Activated naive CD4-positive, alpha-beta T cell treated with anti-CD3 and anti-CD28 coated beads, Interleukin-2, amount 10 ng/mL, durations not matched to agents 7 days and 5 days (primary cell): ENCODE measurements at regions of chr6 and their contacts with region 1.

Region 1: GRCh38 chr6:72411872-72412708 is 209.8 kb upstream of the KCNQ5 start:
- DNase-seq: peak; percentile 75
- H3K4me3 Mint-ChIP-seq: no peak overlapping the region
- H3K27ac Mint-ChIP-seq: no peak overlapping the region
- H3K4me1 Mint-ChIP-seq: no peaks in the 10 kb centered on the region
- H3K27me3 Mint-ChIP-seq: peaks cover 13% of the 10 kb centered on the region

Region 2: GRCh38 chr6:72287801-72288200 is 124.3 kb before region 1 on chr6:
- CTCF ChIA-PET with region 1: no interaction called
- DNase-seq: no peak
- H3K4me3 Mint-ChIP-seq: no peak overlapping the region
- H3K27ac Mint-ChIP-seq: no peak overlapping the region
- H3K4me1 Mint-ChIP-seq: no peaks in the 10 kb centered on the region
- H3K27me3 Mint-ChIP-seq: no peaks in the 10 kb centered on the region

Region 3: DNA sequence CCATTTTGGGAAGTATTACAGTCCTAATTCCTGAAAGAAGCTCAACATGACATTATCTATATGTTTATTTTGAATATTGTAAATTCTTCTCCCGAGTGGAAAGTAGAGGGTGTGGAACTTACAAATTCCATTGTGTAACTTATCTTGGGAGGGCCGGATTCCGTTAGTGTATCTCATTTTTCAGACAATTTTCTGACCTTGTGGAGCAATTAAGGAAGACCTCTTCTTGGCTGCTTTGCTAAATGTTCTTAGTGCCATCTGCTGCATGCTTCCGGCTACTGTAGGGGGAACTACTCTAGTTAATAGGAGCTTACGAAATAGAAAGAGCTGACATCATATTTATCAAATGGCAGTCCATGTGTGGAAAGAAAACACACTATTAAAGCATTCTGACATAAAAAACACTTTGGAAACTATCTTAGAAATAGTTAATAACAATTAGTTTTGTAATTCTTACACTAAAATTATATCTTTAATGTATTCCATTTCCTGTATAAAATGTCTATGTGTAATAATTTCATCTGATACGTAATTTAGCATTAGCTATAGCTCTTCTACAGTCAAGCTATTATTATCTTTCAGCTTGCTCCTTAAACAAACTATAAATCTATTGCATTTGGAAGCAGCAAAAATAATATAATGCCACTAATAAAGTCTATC is 168.3 kb after region 1 on chr6:
- CTCF ChIA-PET with region 1: interaction called, 17 read pairs
- DNase-seq: peak; percentile 24
- H3K4me3 Mint-ChIP-seq: no peak overlapping the region
- H3K27ac Mint-ChIP-seq: no peak overlapping the region
- H3K4me1 Mint-ChIP-seq: no peaks in the 10 kb centered on the region
- H3K27me3 Mint-ChIP-seq: no peaks in the 10 kb centered on the region

Region 4: GRCh38 chr6:72619883-72620696 is 208.0 kb after region 1 on chr6:
- CTCF ChIA-PET with region 1: interaction called, 22 read pairs
- DNase-seq: peak; percentile 71
- H3K4me3 Mint-ChIP-seq: peak overlapping the region; percentile 94
- H3K27ac Mint-ChIP-seq: peak overlapping the region; percentile 97
- H3K4me1 Mint-ChIP-seq: peaks cover 57% of the 10 kb centered on the region
- H3K27me3 Mint-ChIP-seq: peaks cover 7% of the 10 kb centered on the region

Region 5: DNA sequence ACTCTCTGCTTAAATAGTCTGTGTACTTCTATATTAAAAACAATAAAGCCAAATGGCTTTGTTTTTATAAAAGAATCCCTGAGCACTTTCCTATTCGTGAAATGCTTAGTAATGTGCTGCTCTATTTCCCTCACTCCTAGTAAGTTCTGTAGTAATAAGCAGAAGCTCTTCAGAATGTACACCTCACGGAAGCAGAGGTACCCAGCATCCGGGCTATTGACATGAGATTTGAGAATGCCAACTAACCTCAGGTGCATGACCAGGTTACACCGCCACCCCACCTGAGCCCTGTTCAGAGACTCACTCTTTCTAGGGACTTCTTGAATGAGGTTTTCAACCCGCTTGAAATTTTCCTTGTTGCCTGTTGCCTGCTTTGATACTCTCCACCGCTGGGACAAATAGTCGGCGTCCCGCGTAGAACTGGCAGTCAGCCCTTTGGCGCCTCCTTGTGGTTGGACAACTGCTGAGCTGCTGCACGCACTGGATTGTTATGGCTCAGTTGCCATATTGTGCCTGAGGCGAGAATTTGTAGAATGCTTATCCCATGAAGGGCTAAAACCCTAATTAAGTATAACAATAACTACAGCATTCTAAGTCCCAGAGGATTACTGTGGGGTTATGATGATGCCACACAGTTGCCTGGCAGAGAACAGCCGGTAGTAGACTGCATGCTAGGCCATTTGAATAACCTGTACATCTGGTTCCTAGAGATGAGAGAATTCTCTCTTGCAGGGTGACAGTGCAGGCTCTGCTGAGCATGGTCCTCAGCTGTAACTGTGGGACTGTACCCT is 717.8 kb after region 1 on chr6:
- CTCF ChIA-PET with region 1: interaction called, 54 read pairs
- DNase-seq: peak; percentile 89
- H3K4me3 Mint-ChIP-seq: peak overlapping the region; percentile 24
- H3K27ac Mint-ChIP-seq: no peak overlapping the region
- H3K4me1 Mint-ChIP-seq: peaks cover 4% of the 10 kb centered on the region
- H3K27me3 Mint-ChIP-seq: peaks cover 5% of the 10 kb centered on the region

Region 6: GRCh38 chr6:73180763-73181619 is 768.9 kb after region 1 on chr6:
- CTCF ChIA-PET with region 1: interaction called, 11 read pairs
- DNase-seq: peak; percentile 25
- H3K4me3 Mint-ChIP-seq: no peak overlapping the region
- H3K27ac Mint-ChIP-seq: no peak overlapping the region
- H3K4me1 Mint-ChIP-seq: peaks cover 4% of the 10 kb centered on the region
- H3K27me3 Mint-ChIP-seq: no peaks in the 10 kb centered on the region

Region 7: DNA sequence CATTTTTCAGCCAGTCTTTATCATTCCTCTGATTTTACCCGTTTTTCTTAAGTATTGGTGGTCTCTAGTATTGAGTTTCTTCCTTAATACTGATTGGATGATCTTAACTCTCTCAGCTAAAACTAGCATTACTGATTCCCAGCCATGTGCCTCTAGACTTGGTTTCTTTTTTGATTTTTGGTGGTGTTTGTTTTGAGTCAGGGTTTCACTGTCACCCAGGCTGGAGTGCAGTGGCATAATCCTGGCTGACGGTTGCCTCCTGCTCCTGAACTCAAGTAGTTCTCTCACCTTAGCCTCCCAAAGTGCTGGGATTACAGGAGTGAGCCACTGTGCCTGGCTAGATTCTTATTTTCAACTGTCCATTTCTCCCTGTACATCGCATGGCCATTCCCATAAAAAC is 917.1 kb after region 1 on chr6:
- CTCF ChIA-PET with region 1: interaction called, 14 read pairs
- DNase-seq: no peak
- H3K4me3 Mint-ChIP-seq: no peak overlapping the region
- H3K27ac Mint-ChIP-seq: no peak overlapping the region
- H3K4me1 Mint-ChIP-seq: no peaks in the 10 kb centered on the region
- H3K27me3 Mint-ChIP-seq: peaks cover 46% of the 10 kb centered on the region